T-cell (primary cell): ENCODE measurements at regions of chr11 and their contacts with region 1.

Region 1: DNA sequence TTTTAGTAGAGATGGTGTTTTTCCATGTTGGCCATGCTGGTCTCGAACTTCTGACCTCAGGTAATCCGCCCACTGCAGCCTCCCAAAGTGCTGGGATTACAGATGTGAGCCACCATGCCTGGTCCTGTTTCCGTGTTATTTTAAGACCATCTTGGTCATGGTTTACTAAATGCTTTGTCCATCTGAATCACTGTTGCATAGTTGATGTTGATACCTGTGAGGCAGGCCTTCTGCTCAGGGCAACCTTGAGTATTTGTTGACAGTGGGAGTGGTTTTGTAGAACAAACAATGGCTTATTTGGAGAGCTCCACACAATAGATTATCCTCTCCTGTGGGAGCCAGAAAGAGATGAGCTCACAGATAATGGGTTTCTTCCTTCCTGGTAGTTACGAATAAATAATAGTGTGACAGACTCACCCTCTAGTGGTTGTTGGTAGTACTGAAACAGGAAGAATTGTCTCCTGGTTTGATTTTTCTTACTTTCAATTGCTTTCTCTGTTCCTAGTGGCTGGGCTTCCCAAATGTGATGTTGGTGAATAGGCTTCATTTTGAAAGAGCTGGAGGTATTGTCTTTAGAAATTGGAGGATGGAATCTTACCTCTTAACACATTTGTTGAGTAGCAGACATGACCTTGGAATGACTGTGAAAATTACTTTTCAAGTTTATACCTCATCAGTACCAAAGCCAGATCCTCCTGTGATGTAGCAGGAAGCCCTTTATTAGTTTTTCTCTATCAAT is 39.0 kb downstream of the CTNND1 start:
- DNase-seq: peak in 7 of 35 experiments; percentile 4 to 81 (median 20)
- ATAC-seq: peak; percentile 83 to 93 (median 86)
- H3K4me3 ChIP-seq: no peak overlapping the region
- H3K4me3 Mint-ChIP-seq: peak overlapping the region in 2 of 3 donors; percentile 4 to 22
- H3K27ac ChIP-seq: peak overlapping the region; percentile 15
- H3K27ac Mint-ChIP-seq: peak overlapping the region; percentile 77 to 86
- H3K4me1 ChIP-seq: peaks cover 8 to 28% of the 10 kb centered on the region in 2 experiments
- H3K4me1 Mint-ChIP-seq: peaks cover 24 to 32% (median 26%) of the 10 kb centered on the region in 3 donors
- H3K27me3 ChIP-seq: no peaks in the 10 kb centered on the region
- H3K27me3 Mint-ChIP-seq: no peaks in the 10 kb centered on the region

Region 2: DNA sequence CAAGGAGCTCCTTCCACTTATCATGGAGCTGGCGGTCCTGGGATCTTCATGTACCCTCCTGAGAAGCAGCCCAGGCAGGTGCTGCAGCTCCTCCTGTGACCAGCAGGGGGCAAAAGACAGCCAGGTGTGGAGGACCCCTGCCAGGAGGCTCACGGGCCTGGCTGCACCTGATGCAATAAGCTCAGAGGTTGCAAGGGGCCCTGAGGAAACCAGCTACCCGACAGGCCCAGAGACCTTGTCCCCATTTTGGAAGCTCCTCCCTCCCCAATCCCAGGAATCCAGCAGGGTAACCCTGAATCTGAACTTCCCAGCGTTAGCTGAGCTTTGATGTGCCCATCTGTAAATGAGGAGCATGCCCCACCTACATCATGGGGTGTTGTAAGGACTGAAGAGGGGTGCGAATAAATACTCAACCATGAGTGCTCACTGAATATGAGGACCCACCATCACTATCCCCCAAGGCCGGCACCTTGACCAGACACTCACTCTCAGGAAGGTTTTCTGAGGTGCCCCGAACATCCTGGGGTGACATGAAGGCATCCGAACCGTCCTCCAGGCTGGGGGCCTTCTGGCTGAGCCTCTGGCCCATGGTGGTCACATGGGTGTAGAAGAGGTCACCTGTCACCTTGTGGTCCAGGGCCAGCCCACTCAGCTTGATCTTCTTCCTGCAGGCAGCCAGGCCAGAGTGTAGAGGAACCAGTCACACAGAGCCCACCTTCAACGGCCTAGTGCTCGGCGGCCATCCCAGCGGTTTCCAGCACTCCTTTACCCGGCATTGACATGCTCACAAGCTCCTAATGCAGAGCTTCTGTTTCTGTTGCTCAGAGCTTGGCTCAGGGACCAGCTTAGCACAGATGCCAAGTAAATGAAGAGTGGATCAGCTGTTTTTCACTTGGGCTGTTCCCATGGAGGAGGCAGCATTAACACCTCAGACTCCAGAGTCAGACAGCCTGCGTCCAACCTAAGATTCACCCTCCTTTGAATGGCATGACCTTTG is 306.8 kb before region 1 on chr11:
- CTCF ChIA-PET with region 1: interaction called, 5 to 15 read pairs
- POLR2A ChIA-PET with region 1: no interaction called
- DNase-seq: peak; percentile 34 to 80 (median 64)
- ATAC-seq: peak; percentile 89 to 92 (median 91)
- H3K4me3 ChIP-seq: no peak overlapping the region
- H3K4me3 Mint-ChIP-seq: no peak overlapping the region
- H3K27ac ChIP-seq: no peak overlapping the region
- H3K27ac Mint-ChIP-seq: peak overlapping the region; percentile 19 to 39
- H3K4me1 ChIP-seq: peaks cover 0 to 3% of the 10 kb centered on the region in 2 experiments
- H3K4me1 Mint-ChIP-seq: peaks cover 0 to 3% (median 0%) of the 10 kb centered on the region in 3 donors
- H3K27me3 ChIP-seq: peaks cover 0 to 7% of the 10 kb centered on the region in 2 experiments
- H3K27me3 Mint-ChIP-seq: no peaks in the 10 kb centered on the region

Region 3: GRCh38 chr11:57698843-57699365 is 101.7 kb before region 1 on chr11:
- CTCF ChIA-PET with region 1: interaction called, 6 to 10 read pairs
- POLR2A ChIA-PET with region 1: no interaction called
- DNase-seq: no peak
- ATAC-seq: peak in 2 of 4 experiments; percentile 9 to 31
- H3K4me3 ChIP-seq: no peak overlapping the region
- H3K4me3 Mint-ChIP-seq: no peak overlapping the region
- H3K27ac ChIP-seq: no peak overlapping the region
- H3K27ac Mint-ChIP-seq: no peak overlapping the region
- H3K4me1 ChIP-seq: no peaks in the 10 kb centered on the region
- H3K4me1 Mint-ChIP-seq: peaks cover 0 to 8% (median 0%) of the 10 kb centered on the region in 3 donors
- H3K27me3 ChIP-seq: no peaks in the 10 kb centered on the region
- H3K27me3 Mint-ChIP-seq: no peaks in the 10 kb centered on the region

Region 4: GRCh38 chr11:57727185-57727584 is 73.4 kb before region 1 on chr11:
- CTCF ChIA-PET with region 1: interaction called, 4 to 5 read pairs
- POLR2A ChIA-PET with region 1: interaction called in 1 of 2 experiments, 13 read pairs
- DNase-seq: no peak
- ATAC-seq: no peak
- H3K4me3 ChIP-seq: no peak overlapping the region
- H3K4me3 Mint-ChIP-seq: no peak overlapping the region
- H3K27ac ChIP-seq: no peak overlapping the region
- H3K27ac Mint-ChIP-seq: peak overlapping the region in 1 of 2 donors; percentile 58
- H3K4me1 ChIP-seq: no peaks in the 10 kb centered on the region
- H3K4me1 Mint-ChIP-seq: peaks cover 10 to 19% (median 12%) of the 10 kb centered on the region in 3 donors
- H3K27me3 ChIP-seq: no peaks in the 10 kb centered on the region
- H3K27me3 Mint-ChIP-seq: no peaks in the 10 kb centered on the region

Region 5: GRCh38 chr11:57751676-57752253 is 48.8 kb before region 1 on chr11 and contains the start of gene BTBD18:
- CTCF ChIA-PET with region 1: interaction called, 4 to 26 read pairs
- POLR2A ChIA-PET with region 1: interaction called, 3 read pairs
- DNase-seq: peak in 1 of 35 experiments; percentile 30
- ATAC-seq: no peak
- H3K4me3 ChIP-seq: no peak within 1 kb of the TSS
- H3K4me3 Mint-ChIP-seq: no peak within 1 kb of the TSS
- H3K27ac ChIP-seq: no peak within 1 kb of the TSS
- H3K27ac Mint-ChIP-seq: peak within 1 kb of the TSS; percentile 24 to 68
- H3K4me1 ChIP-seq: no peaks in the 10 kb centered on the region
- H3K4me1 Mint-ChIP-seq: peaks cover 9 to 15% (median 13%) of the 10 kb centered on the region in 3 donors
- H3K27me3 ChIP-seq: no peaks in the 10 kb centered on the region
- H3K27me3 Mint-ChIP-seq: no peaks in the 10 kb centered on the region
- total RNA-seq, gene BTBD18: 0.09 to 0.23 TPM in 2 of 5 donors, not detected in the others

Region 6: GRCh38 chr11:58059007-58059350 is 258.4 kb after region 1 on chr11:
- CTCF ChIA-PET with region 1: no interaction called
- POLR2A ChIA-PET with region 1: no interaction called
- DNase-seq: no peak
- ATAC-seq: no peak
- H3K4me3 ChIP-seq: no peak overlapping the region
- H3K4me3 Mint-ChIP-seq: no peak overlapping the region
- H3K27ac ChIP-seq: no peak overlapping the region
- H3K27ac Mint-ChIP-seq: no peak overlapping the region
- H3K4me1 ChIP-seq: no peaks in the 10 kb centered on the region
- H3K4me1 Mint-ChIP-seq: no peaks in the 10 kb centered on the region
- H3K27me3 ChIP-seq: peaks cover 0 to 7% of the 10 kb centered on the region in 2 experiments
- H3K27me3 Mint-ChIP-seq: peaks cover 5 to 7% of the 10 kb centered on the region in 2 donors